BJ (cell line): ENCODE measurements at regions of chr14 and their contacts with region 1.

Region 1: GRCh38 chr14:67359775-67360648 is at the starts of genes ATP6V1D and EIF2S1:
- DNase-seq: peak; percentile 97
- H3K4me3 ChIP-seq: peak within 1 kb of the TSS; percentile 85
- H3K27me3 ChIP-seq: no peaks in the 10 kb centered on the region
- CTCF ChIP-seq: peak; percentile 95
- polyA plus RNA-seq, gene ATP6V1D: 62.1 and 100 TPM in 2 replicates
- polyA plus RNA-seq, gene EIF2S1: 34.4 and 116 TPM in 2 replicates

Region 2: DNA sequence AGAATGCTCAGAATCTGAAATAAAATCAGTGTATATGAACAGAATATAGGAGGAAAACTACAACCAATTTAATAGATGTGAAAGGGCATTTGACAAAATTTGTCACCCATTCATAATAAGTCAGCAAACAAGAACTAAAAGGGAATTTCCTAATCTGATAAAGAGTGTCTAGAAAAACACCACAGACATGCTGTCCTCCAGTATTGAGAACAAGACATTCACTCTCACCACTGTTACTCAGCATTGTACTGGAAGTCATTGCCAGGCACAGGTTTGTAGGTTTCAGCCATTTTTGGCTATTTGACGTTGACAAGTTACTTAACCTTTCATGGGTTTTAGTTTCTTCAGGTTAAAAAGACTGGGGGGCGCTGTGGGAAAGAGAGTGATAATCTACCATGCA is 13.3 kb after region 1 on chr14:
- CTCF ChIA-PET with region 1: interaction called, 13 read pairs
- POLR2A ChIA-PET with region 1: no interaction called
- DNase-seq: no peak
- H3K4me3 ChIP-seq: no peak overlapping the region
- H3K27me3 ChIP-seq: no peaks in the 10 kb centered on the region
- CTCF ChIP-seq: no peak